ENCODE measurements at regions of chr7 and their contacts with region 1.

Region 1: DNA sequence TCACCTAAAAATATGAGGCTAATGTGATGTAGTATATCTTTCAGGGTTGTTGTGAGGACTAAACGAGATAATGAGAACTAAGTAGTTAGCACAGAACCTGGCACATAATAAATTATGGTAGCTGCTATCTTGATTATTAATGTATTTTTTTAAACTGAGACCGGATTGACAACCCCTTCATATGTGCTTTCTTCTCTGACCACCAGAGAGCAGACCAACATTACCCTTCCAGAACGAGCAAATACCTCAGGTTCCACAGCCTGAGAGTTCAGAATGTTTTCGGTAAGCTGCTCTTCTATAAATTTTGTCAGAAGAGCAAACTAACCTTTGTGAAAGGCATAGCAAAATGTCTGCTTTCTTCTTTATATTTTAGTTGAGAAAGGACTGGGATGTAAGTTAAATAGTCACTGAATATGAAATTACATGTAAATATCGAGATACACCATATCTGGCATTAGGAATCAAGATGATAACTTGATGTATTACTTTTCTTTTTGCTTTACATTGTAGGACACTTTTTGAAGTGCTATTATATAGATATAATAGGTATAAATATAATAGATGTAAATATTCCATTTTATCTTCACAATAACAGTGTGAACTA is 13.6 kb upstream of the BPGM start:
- DNase-seq: peak; percentile 52
- H3K4me3 Mint-ChIP-seq: no peak overlapping the region
- H3K27ac Mint-ChIP-seq: no peak overlapping the region
- H3K4me1 Mint-ChIP-seq: peaks cover 27% of the 10 kb centered on the region
- H3K27me3 Mint-ChIP-seq: peaks cover 5% of the 10 kb centered on the region

Region 2: DNA sequence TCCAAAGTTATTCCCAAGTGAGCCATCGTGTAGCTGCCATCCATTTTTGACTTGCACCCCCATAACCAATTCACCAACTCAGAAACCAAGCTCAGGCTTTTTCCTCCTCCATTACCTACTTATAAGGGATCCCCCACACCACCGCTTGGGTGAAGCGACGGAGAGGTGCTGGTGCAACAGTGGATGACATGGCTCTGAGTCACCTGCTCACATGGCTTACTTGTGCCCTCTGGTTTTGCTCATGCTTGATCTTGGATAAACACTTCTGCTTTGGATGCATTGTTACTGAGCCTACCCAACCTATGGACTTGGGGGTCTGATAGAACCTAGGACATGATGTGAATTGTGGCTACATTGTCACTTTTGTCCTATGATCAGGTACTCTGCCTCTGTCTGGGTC is 162.2 kb before region 1 on chr7:
- CTCF ChIA-PET with region 1: no interaction called
- intact Hi-C with region 1: no loop called
- DNase-seq: peak; percentile 18
- H3K4me3 Mint-ChIP-seq: no peak overlapping the region
- H3K27ac Mint-ChIP-seq: no peak overlapping the region
- H3K4me1 Mint-ChIP-seq: no peaks in the 10 kb centered on the region
- H3K27me3 Mint-ChIP-seq: no peaks in the 10 kb centered on the region

Region 3: DNA sequence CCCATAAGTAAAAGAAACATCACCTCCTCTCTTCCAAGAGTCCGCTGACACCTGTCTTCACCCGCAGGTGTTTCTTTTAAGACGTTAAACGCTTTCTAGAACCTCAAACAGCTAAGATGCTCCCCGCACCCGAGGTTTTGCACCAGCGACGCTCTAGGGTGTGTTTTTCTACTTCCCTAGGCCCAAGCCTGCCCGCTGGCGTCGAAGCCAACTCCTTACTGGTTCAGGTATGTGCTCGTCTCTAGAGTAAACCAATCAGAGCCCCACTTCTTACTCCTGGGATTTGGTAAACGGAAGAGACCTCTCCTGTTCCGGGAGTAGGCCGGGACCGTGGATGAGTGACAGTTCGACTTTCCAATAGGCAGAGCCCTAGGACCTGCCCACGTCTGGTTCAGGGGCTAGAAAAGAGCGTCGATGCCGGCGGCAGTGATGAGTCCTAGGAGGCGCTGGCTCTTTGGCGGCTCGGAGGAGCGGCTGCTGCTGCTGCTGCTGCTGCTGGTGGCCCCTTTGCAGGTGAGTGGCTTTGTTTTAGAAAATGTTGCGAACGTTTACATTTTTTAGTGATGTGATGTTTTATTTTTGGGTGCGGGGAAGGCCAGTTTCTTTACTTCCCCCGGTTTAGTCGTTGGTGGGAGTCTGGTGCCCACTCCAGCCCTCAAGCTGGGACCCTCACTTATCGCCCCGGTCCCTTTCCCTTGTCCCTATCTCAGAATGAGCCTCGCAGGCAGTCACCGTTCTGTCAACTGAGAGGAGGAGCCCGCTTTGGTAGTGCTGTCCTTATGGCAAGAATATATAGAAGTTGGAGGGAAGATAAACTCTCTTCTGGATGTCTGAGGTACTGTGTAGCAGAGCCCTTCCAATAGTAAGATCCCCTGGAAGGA is 13.6 kb after region 1 on chr7 and contains the start of gene BPGM:
- CTCF ChIA-PET with region 1: interaction called, 7 read pairs
- intact Hi-C with region 1: loop called (anchors 1 kb)
- DNase-seq: peak; percentile 99
- H3K4me3 Mint-ChIP-seq: no peak within 1 kb of the TSS
- H3K27ac Mint-ChIP-seq: no peak within 1 kb of the TSS
- H3K4me1 Mint-ChIP-seq: peaks cover 37% of the 10 kb centered on the region
- H3K27me3 Mint-ChIP-seq: no peaks in the 10 kb centered on the region
- total RNA-seq, gene BPGM: 13.9 to 14.2 TPM

Region 4: GRCh38 chr7:134690016-134690415 is 57.0 kb after region 1 on chr7:
- CTCF ChIA-PET with region 1: interaction called, 17 read pairs
- intact Hi-C with region 1: no loop called
- DNase-seq: peak; percentile 13
- H3K4me3 Mint-ChIP-seq: no peak overlapping the region
- H3K27ac Mint-ChIP-seq: no peak overlapping the region
- H3K4me1 Mint-ChIP-seq: peaks cover 14% of the 10 kb centered on the region
- H3K27me3 Mint-ChIP-seq: no peaks in the 10 kb centered on the region

Region 5: DNA sequence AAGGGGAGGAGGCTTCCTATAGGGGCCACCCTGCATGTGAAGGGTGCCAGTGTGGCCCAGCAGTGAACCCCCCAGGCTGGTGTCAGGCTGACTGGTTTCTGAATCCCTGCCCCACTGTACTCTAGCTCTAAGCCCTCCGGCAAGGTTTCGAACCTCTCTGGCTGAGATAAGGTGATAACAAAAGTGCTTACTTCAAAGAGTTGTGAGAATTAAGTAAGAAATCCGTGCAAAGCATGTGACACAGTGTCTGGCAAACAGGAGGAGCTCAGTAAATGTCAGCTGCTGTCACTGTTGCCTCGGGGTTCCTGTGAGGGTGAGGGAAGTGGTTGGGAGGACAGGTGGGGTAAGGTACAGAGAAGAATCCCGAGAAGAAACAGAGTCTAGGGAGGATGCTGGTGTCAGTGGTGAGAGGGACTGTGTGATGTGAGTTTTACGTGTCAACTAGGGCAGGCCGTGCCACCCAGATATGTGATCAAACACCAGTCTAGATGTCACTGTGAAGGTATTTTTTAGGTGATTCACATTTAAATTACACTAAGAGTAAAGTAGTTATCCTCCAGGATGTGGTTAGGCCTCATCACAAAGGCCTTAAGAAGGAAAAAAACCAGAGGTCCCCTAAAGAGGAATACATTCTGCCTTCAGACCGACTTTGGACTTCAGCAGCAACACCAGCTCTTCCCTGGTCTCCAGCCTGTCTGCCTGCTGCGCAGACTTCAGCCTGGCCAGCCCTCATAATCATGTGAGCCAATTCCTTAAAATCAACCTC is 78.0 kb after region 1 on chr7:
- CTCF ChIA-PET with region 1: interaction called, 6 read pairs
- intact Hi-C with region 1: loop called (anchors 1 kb)
- DNase-seq: peak; percentile 84
- H3K4me3 Mint-ChIP-seq: peak overlapping the region; percentile 42
- H3K27ac Mint-ChIP-seq: peak overlapping the region; percentile 91
- H3K4me1 Mint-ChIP-seq: peaks cover 16% of the 10 kb centered on the region
- H3K27me3 Mint-ChIP-seq: no peaks in the 10 kb centered on the region

Region 6: GRCh38 chr7:134755401-134756022 is 122.5 kb after region 1 on chr7:
- CTCF ChIA-PET with region 1: interaction called, 49 read pairs
- intact Hi-C with region 1: loop called (anchors 1 kb)
- DNase-seq: peak; percentile 75
- H3K4me3 Mint-ChIP-seq: no peak overlapping the region
- H3K27ac Mint-ChIP-seq: no peak overlapping the region
- H3K4me1 Mint-ChIP-seq: no peaks in the 10 kb centered on the region
- H3K27me3 Mint-ChIP-seq: no peaks in the 10 kb centered on the region

Region 7: GRCh38 chr7:134943764-134944400 is 310.8 kb after region 1 on chr7:
- CTCF ChIA-PET with region 1: interaction called, 16 read pairs
- intact Hi-C with region 1: loop called (anchors 1 kb)
- DNase-seq: no peak
- H3K4me3 Mint-ChIP-seq: no peak overlapping the region
- H3K27ac Mint-ChIP-seq: no peak overlapping the region
- H3K4me1 Mint-ChIP-seq: peaks cover 18% of the 10 kb centered on the region
- H3K27me3 Mint-ChIP-seq: no peaks in the 10 kb centered on the region

Region 8: DNA sequence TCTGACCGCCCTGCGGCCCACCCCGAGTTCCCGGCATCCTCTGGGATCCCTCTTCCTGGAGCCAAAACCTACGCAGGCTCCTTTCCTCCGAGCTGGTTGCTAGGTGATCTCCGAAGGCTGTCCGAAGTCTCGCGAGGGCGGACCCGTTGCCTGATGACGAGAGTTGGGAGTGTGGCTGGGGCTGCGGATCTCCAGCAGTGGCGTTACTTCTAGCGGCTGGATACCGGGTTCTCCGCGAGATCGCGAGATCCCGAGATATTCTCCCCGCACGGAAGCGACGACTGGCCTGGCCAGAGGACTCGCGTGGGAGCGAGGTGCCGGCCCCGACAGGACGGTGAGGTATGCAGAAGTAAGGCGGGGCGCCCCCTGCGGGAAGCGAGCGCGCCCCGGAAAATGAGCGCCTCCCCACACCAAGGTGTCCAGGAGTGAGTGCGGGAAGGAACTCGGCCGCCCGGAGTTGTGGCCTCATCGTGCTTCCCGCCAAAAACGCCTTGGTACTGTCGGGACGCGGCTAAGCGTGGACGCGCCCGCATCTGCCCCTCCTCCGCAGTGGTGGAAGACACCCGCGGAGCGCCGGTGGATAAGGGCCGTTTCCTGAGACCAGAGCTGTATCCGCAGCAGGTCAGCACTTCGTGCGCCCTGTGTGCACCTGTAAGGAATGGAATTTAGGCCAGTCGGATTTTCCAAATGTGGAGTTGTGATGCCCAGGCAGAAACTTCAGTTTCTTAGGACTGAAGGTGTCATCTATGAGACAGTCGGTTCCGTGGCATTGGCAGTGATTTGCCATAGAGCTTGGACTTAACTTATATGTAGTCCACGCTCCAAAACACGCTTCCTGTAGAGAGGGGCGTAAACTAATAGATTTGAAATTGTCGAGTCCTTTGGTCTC is 353.6 kb after region 1 on chr7 and contains the start of gene AGBL3:
- CTCF ChIA-PET with region 1: interaction called, 6 read pairs
- intact Hi-C with region 1: loop called (anchors 2 kb)
- DNase-seq: peak; percentile 97
- H3K4me3 Mint-ChIP-seq: peak within 1 kb of the TSS; percentile 96
- H3K27ac Mint-ChIP-seq: peak within 1 kb of the TSS; percentile 98
- H3K4me1 Mint-ChIP-seq: peaks cover 32% of the 10 kb centered on the region
- H3K27me3 Mint-ChIP-seq: no peaks in the 10 kb centered on the region
- total RNA-seq, gene AGBL3: 2.6 to 3.6 TPM